Heart left ventricle (tissue), 16 donors: ENCODE measurements at regions of chr1 and their contacts with region 1.

Region 1: DNA sequence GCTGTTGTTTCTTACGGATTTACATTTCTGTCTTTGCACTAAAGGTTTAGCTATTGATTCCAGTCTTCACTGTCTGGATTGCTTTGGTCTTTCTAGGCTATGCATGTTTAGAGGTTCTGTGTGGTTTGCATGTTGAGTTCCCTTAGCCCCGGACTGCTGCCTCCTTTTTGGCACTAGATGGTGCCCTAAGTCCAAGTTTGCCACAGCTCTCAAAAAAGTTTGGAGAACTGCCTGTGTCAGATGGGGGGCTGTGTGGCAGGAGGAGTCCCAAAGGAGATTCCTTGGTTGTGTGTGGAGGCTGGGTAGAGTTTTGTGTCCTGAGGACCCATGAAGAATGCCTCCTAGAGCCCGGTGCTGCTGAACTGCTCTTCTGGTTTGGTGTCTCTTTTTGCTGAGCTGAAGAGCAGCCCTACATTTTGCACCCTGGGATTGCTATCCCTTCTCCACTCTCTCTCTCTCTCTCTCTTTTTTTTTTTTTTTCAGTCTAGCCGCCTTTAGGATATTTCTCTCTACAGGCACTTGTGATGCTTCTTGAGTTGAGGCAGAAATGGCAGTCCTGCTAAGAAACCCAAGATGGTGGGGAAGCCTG is 74.4 kb downstream of the PTGS2 start:
- DNase-seq: peak in 2 of 5 donors; percentile 20 to 35
- ATAC-seq: peak in 3 of 4 donors; percentile 65 to 79 (median 70)
- H3K4me3 ChIP-seq: no peak overlapping the region
- H3K27ac ChIP-seq: no peak overlapping the region
- H3K4me1 ChIP-seq: no peaks in the 10 kb centered on the region
- H3K27me3 ChIP-seq: no peaks in the 10 kb centered on the region
- CTCF ChIP-seq: peak; percentile 21 to 74 (median 61)
- POLR2A ChIP-seq: no peak

Region 2: GRCh38 chr1:186482661-186483255 is 123.1 kb before region 1 on chr1:
- intact Hi-C with region 1: loop called in 3 of 10 experiments (anchors 5 to 10 kb)
- DNase-seq: peak in 4 of 5 donors; percentile 16 to 37 (median 34)
- ATAC-seq: peak in 3 of 4 donors; percentile 50 to 66 (median 64)
- H3K4me3 ChIP-seq: no peak overlapping the region
- H3K27ac ChIP-seq: no peak overlapping the region
- H3K4me1 ChIP-seq: peaks cover 0 to 3% (median 0%) of the 10 kb centered on the region in 12 donors
- H3K27me3 ChIP-seq: no peaks in the 10 kb centered on the region
- CTCF ChIP-seq: peak; percentile 62 to 90 (median 81)
- POLR2A ChIP-seq: no peak

Region 3: DNA sequence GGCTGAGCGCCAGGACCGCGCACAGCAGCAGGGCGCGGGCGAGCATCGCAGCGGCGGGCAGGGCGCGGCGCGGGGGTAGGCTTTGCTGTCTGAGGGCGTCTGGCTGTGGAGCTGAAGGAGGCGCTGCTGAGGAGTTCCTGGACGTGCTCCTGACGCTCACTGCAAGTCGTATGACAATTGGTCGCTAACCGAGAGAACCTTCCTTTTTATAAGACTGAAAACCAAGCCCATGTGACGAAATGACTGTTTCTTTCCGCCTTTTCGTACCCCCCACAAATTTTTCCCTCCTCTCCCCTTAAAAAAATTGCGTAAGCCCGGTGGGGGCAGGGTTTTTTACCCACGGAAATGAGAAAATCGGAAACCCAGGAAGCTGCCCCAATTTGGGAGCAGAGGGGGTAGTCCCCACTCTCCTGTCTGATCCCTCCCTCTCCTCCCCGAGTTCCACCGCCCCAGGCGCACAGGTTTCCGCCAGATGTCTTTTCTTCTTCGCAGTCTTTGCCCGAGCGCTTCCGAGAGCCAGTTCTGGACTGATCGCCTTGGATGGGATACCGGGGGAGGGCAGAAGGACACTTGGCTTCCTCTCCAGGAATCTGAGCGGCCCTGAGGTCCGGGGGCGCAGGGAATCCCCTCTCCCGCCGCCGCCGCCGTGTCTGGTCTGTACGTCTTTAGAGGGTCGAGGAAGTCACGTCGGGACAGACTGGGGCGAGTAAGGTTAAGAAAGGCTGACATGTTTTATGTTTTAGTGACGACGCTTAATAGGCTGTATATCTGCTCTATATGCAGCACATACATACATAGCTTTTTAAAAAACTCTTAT is 74.6 kb after region 1 on chr1 and contains the start of gene PTGS2:
- intact Hi-C with region 1: loop called in 1 of 10 experiments (anchors 5 kb)
- DNase-seq: peak; percentile 70 to 82 (median 76)
- ATAC-seq: peak; percentile 93 to 97 (median 96)
- H3K4me3 ChIP-seq: peak within 1 kb of the TSS; percentile 9 to 76 (median 58)
- H3K27ac ChIP-seq: peak within 1 kb of the TSS; percentile 16 to 94 (median 66)
- H3K4me1 ChIP-seq: peaks cover 0 to 7% (median 0%) of the 10 kb centered on the region in 12 donors
- H3K27me3 ChIP-seq: peaks cover 0 to 19% (median 0%) of the 10 kb centered on the region in 9 donors
- CTCF ChIP-seq: peak in 10 of 12 donors; percentile 11 to 59 (median 30)
- POLR2A ChIP-seq: peak in 1 of 2 donors; percentile 52
- total RNA-seq, gene PTGS2: 0.22 to 4.2 (median 0.72) TPM

Region 4: DNA sequence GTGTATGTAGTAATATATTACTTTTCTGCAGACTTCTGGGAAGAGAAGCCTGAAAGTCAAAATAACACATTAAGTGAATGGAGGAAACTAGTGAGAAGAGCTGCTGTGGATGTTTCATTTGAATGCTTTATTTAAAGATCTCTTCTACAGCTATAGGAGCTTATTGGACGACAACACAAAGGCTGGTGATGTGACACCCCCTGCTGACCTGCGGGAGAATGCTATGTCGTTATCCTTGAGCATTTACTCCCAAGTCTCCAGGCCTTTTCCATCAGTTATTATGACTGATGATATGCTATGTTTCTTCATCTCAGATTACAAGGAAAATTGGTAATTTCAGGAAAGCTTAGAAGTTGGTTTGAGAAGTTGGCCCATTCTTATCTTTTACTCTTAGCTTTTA is 200.6 kb after region 1 on chr1:
- intact Hi-C with region 1: loop called in 1 of 10 experiments (anchors 2 kb)
- DNase-seq: peak in 1 of 5 donors; percentile 11
- ATAC-seq: no peak
- H3K4me3 ChIP-seq: no peak overlapping the region
- H3K27ac ChIP-seq: no peak overlapping the region
- H3K4me1 ChIP-seq: no peaks in the 10 kb centered on the region
- H3K27me3 ChIP-seq: no peaks in the 10 kb centered on the region
- CTCF ChIP-seq: peak in 2 of 12 donors; percentile 13 to 23
- POLR2A ChIP-seq: no peak

Region 5: DNA sequence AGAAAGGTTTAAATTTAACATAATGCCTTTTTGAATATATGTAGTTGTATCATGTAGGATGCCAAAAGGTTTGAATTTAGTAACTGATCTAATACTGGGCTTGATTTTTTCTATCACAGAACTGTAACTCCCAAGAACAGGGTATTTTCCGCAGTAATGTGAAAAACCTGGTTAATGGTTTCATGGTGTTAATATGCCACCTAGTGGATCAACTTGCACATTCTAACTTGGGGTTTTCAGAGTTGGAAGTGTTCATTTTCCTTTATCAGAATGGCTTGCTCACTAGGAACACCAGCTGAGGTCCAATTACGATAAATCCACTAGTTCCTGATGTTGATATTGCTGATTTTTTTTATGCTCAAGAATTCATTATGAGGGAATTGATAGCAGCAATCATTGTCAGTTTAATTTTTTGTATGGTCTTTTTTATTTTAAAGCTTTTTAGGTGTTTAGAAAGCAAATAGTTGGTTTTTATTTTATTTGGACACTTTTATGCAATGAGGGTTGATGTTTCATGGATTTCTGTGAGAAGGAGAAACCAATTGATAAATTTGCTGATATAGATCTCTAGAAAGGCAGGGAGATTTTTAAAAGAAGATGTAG is 380.1 kb after region 1 on chr1:
- intact Hi-C with region 1: loop called (anchors 1 to 5 kb)
- DNase-seq: no peak
- ATAC-seq: peak in 3 of 4 donors; percentile 62 to 73 (median 64)
- H3K4me3 ChIP-seq: no peak overlapping the region
- H3K27ac ChIP-seq: peak overlapping the region in 1 of 12 donors; percentile 79
- H3K4me1 ChIP-seq: peaks cover 0 to 3% (median 0%) of the 10 kb centered on the region in 12 donors
- H3K27me3 ChIP-seq: no peaks in the 10 kb centered on the region
- CTCF ChIP-seq: peak; percentile 49 to 79 (median 66)
- POLR2A ChIP-seq: no peak

Region 6: GRCh38 chr1:187051618-187052232 is 445.9 kb after region 1 on chr1:
- intact Hi-C with region 1: loop called in 1 of 10 experiments (anchors 10 kb)
- DNase-seq: no peak
- ATAC-seq: no peak
- H3K4me3 ChIP-seq: no peak overlapping the region
- H3K27ac ChIP-seq: no peak overlapping the region
- H3K4me1 ChIP-seq: peaks cover 0 to 5% (median 0%) of the 10 kb centered on the region in 12 donors
- H3K27me3 ChIP-seq: peaks cover 0 to 4% (median 0%) of the 10 kb centered on the region in 9 donors
- CTCF ChIP-seq: peak; percentile 27 to 61 (median 37)
- POLR2A ChIP-seq: no peak